Panc1 (cell line): ENCODE measurements at regions of chr4 and their contacts with region 1.

Region 1: GRCh38 chr4:36351082-36351666 is 69.8 kb downstream of the DTHD1 start:
- DNase-seq: peak; percentile 13
- ATAC-seq: no peak
- H3K4me3 ChIP-seq: no peak overlapping the region
- H3K27ac ChIP-seq: no peak overlapping the region
- H3K4me1 ChIP-seq: no peaks in the 10 kb centered on the region
- H3K27me3 ChIP-seq: no peaks in the 10 kb centered on the region
- CTCF ChIP-seq: peak; percentile 72

Region 2: DNA sequence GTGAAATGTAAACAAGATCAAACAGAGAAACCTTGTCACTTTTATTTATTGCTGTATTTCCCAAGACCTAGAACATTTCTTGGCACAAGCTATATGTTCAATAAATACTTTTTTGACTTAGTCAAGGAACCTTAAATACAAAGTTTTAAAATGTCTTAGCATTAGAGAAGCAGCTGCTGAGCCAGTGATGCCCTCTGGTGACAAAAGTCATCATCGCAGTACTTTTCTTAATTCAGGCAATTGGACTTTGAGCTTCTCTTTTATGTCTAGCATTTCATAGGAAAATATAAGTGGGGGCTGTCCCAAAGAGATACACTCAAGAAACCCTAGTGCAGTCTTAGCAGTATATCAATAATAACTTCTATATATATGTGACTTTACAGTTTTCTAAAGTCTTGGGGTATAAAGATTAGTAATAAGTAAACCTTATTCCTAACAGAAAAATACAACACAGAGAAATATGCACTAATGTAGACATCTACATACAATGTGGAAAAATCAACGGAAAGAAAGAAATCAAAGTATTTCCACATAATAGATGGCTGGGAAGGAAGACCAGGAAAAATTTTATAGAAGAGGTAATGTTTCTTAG is 48.7 kb after region 1 on chr4:
- CTCF ChIA-PET with region 1: no interaction called
- POLR2A ChIA-PET with region 1: no interaction called
- in situ Hi-C with region 1: no loop called
- intact Hi-C with region 1: loop called (anchors 2 kb)
- DNase-seq: peak; percentile 15
- ATAC-seq: no peak
- H3K4me3 ChIP-seq: no peak overlapping the region
- H3K27ac ChIP-seq: no peak overlapping the region
- H3K4me1 ChIP-seq: no peaks in the 10 kb centered on the region
- H3K27me3 ChIP-seq: no peaks in the 10 kb centered on the region
- CTCF ChIP-seq: peak; percentile 62; the same call in 1 of the 2 replicates

Region 3: DNA sequence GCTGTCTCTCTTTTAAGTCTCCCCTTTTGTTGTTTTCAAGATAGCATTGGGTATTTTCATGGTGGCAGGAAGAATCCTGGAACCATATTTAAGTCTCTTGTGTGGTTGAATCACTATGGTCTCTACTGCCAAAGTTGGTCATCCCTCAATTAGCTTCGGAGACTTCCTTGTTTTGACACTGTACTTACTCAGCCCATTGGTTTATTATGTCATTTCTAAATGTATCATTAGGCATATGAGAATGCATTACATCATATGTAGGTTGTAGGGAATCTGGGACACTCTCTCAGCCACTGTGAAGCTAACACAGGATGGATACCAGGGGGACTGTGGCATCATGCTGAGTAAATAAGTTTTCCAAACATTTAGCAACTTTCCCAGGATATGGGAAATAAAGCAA is 142.1 kb after region 1 on chr4:
- CTCF ChIA-PET with region 1: no interaction called
- POLR2A ChIA-PET with region 1: no interaction called
- in situ Hi-C with region 1: no loop called
- intact Hi-C with region 1: no loop called
- DNase-seq: no peak
- ATAC-seq: no peak
- H3K4me3 ChIP-seq: no peak overlapping the region
- H3K27ac ChIP-seq: no peak overlapping the region
- H3K4me1 ChIP-seq: no peaks in the 10 kb centered on the region
- H3K27me3 ChIP-seq: no peaks in the 10 kb centered on the region
- CTCF ChIP-seq: no peak